Posterior vena cava (tissue), 2 donors: ENCODE measurements at regions of chr2 and their contacts with region 1.

Region 1: GRCh38 chr2:65003037-65003436 is 13.8 kb downstream of the SLC1A4 start:
- DNase-seq: no peak

Region 2: DNA sequence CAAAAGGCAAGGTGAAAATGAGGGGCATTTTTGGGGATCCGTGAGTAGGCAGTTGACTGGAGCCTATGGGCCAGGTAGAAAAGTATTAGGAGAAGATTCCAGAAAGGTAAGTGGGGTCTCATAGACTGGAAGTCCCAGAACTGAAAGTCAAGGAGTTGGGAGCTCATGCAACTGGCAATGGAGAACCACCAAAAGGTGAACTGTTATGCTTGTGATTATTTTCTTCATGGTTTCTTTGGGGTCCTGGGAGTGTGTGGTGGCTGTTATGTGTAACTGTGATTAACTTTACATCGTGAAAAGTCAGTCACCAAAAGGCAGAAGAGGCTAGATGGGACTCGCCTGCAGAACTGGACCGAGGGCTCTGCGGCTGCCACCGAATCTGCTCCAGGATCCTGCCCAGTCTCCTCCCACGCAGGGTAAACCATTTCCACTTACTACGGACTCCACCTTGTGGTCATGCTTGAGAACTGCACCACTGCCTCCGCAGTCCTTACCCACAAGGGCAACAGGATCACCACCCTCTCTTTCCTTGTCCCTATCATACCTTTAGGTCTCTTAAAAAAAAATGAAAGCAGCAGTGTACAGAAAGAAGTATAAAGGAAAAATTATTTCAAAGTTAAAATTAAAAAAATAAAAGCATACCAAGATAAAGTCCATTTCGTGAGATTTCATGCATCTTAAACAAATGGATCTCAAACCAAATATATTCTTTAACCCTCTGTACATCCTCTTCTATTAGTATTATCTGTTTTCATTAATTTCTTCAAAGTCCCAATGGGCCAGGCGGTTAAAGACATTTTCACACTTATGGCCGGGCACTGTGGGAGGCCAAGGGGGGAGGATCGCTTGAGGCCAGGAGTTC is 37.6 kb after region 1 on chr2:
- intact Hi-C with region 1: loop called in 1 of 2 experiments (anchors 1 kb)
- DNase-seq: peak; percentile 94